ENCODE measurements at regions of chr5 and their contacts with region 1.

Region 1: DNA sequence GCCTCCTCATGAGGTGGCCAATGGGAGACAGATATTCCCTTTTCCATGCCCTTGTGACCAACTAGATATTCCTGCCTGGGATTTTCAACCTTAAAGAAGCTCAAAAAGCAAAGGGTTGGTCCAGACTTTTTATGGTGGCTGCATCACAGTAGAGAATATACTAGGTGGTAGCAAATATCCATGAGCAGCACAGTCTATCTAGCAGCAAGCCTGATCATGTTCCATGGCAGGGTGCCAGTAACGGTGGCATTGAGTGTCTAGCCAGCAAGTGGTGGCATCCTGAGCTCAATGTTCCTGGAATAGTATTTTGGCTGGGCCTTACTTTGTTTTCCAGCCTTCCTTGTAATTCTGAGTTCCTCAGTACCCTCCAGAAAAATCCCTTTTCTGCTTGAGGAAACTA is 25.8 kb downstream of the CDC25C start:
- DNase-seq: peak; percentile 90 to 91
- ATAC-seq: peak; percentile 99 to 100
- H3K4me3 ChIP-seq: no peak overlapping the region
- H3K27ac ChIP-seq: peak overlapping the region; percentile 55 to 77 (median 60)
- H3K4me1 ChIP-seq: peaks cover 7 to 8% of the 10 kb centered on the region in 2 donors
- H3K27me3 ChIP-seq: no peaks in the 10 kb centered on the region
- CTCF ChIP-seq: peak in 3 of 5 experiments; percentile 19 to 45 (median 21)
- POLR2A ChIP-seq: no peak

Region 2: DNA sequence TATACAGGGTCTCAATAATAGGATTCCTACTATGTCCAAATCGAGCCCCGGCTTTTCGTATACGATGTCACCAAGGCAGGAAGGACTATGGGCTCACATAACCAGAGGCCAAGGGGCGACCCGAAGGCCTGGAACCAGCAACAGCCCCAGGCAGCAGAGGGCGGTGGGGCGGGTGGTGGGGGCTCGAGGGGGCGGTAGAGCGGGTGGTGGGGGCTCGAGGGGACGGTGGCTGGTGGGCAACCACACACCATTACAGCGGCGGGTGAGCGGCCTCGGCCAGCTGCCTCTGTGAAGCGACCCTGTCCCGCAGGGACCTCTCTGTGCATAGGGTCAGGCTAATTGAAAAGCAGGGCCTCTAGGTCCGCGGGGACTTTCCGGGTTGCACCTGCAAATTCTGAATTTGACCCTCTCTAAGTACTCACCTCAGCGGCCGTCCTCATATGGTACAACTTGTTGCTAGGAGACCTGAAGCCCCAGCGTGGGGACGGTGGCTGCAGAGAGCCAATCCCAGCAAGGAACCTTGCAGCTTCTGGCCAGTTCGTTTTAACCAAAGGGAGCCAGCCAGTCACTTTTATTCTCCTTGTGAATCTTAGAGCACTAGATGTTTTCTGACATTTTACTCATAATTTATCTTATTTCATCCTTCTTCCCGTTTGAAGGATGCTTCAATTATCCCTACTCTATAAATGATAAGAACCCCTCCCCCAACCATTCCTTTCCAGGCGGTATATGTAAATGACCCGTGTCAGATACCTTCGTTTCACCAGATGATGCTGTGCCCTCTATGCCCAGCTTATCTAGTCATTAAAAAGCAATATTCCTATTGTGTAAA is 166.6 kb before region 1 on chr5 and contains the start of gene NME5:
- in situ Hi-C with region 1: no loop called
- intact Hi-C with region 1: no loop called
- DNase-seq: peak; percentile 20 to 31
- ATAC-seq: peak; percentile 66 to 74
- H3K4me3 ChIP-seq: peak within 1 kb of the TSS; percentile 50 to 57 (median 56)
- H3K27ac ChIP-seq: no peak within 1 kb of the TSS
- H3K4me1 ChIP-seq: peaks cover 0 to 7% of the 10 kb centered on the region in 2 donors
- H3K27me3 ChIP-seq: no peaks in the 10 kb centered on the region
- CTCF ChIP-seq: no peak
- POLR2A ChIP-seq: no peak
- total RNA-seq, gene NME5: 0.51 TPM in 2 of 4 donors, not detected in the others

Region 3: DNA sequence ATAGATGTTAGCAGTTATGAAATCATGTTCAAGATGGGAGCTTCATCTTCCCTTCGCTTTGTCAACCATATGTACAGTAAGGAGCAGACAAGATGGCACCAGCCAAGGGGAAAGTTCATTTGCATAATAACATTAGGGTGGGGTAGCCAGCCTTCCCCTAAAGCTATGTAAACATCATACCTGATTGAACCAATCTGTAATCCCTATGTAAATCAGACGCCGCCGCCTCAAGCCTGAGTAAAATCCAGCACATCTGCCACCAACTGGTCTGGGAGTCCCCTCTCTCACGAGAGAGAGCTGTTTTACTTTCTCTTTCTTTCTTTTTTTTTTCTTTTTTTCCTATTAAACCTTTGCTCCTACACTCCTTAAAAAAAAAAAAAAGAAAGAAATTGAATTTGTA is 102.2 kb after region 1 on chr5:
- in situ Hi-C with region 1: loop called in 1 of 4 experiments (anchors 25 kb)
- intact Hi-C with region 1: loop called (anchors 1 kb)
- DNase-seq: no peak
- ATAC-seq: no peak
- H3K4me3 ChIP-seq: no peak overlapping the region
- H3K27ac ChIP-seq: no peak overlapping the region
- H3K4me1 ChIP-seq: no peaks in the 10 kb centered on the region
- H3K27me3 ChIP-seq: no peaks in the 10 kb centered on the region
- CTCF ChIP-seq: no peak
- POLR2A ChIP-seq: no peak

Region 4: GRCh38 chr5:138601444-138601843 is 295.6 kb after region 1 on chr5:
- in situ Hi-C with region 1: no loop called
- intact Hi-C with region 1: no loop called
- DNase-seq: no peak
- ATAC-seq: peak in 1 of 2 donors; percentile 64
- H3K4me3 ChIP-seq: no peak overlapping the region
- H3K27ac ChIP-seq: no peak overlapping the region
- H3K4me1 ChIP-seq: no peaks in the 10 kb centered on the region
- H3K27me3 ChIP-seq: peaks cover 0 to 3% (median 0%) of the 10 kb centered on the region in 3 donors
- CTCF ChIP-seq: no peak
- POLR2A ChIP-seq: no peak